ENCODE measurements at regions of chr15 and their contacts with region 1.

Region 1: DNA sequence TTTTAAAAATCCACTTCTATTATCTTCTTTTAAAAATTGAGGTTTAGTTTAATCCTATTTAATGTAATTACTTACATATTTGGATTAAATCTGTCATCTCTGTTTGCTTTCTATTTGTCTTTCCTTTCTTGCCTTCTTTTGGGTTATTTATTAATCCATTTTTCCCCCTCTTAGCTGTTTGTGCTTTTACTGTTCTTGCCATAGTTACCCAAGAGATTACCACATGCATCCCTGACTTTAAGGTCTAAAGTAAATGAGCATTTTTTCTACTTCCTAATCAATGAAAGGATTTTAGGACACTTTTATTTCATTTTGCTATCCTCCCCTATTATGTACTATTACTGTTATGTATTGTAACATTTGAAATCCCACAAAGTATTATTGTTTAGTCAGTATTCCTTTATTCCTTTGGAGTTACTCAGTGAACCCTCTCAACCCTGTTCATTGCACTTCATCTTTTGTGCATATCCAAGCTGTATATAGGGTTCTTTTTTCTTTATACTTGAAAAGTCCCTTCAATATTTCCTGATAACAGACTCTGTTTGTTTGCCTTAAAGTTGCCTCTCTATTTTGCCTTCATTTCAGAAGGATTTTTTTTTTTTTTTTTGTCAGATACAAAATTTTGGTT is 62.7 kb downstream of the MEF2A start:
- DNase-seq: no peak
- H3K4me3 ChIP-seq: no peak overlapping the region
- H3K27ac ChIP-seq: no peak overlapping the region
- H3K4me1 ChIP-seq: peaks cover 0 to 43% (median 21%) of the 10 kb centered on the region in 4 donors
- H3K27me3 ChIP-seq: no peaks in the 10 kb centered on the region
- CTCF ChIP-seq: no peak
- EP300 ChIP-seq: no peak
- POLR2A ChIP-seq: no peak

Region 2: GRCh38 chr15:98856218-98856907 is 772.1 kb before region 1 on chr15:
- intact Hi-C with region 1: no loop called
- DNase-seq: no peak
- H3K4me3 ChIP-seq: no peak overlapping the region
- H3K27ac ChIP-seq: peak overlapping the region; percentile 86 to 91 (median 89)
- H3K4me1 ChIP-seq: peaks cover 2 to 85% (median 78%) of the 10 kb centered on the region in 4 donors
- H3K27me3 ChIP-seq: no peaks in the 10 kb centered on the region
- CTCF ChIP-seq: no peak
- EP300 ChIP-seq: no peak
- POLR2A ChIP-seq: no peak

Region 3: DNA sequence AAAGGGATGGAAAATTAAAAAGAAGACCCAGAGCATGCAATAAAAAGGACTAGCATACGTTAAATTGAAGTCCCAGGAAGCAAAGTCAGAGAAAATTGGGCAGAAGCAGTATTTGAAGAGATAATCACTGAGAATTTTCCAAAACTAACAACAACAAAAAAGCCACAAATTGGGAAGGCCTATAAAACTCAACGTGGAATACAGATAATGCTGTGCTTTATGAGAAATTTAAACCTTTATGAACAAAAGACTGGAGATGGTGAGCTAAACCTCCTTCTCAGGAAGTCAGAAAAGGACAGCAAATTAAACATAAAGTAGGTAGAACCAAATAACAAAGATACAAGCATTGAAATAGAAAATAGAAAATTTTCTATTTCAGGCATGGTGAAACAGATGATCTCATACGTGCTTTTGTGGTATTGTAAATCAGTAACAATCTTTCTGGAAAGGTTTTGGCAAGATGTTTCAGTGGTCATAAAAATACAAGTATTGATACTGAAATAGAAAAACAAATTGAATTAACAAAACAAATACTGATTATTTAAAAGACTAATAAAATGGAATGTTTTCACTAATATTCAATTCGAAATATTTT is 49.1 kb after region 1 on chr15:
- intact Hi-C with region 1: loop called (anchors 5 kb)
- DNase-seq: no peak
- H3K4me3 ChIP-seq: no peak overlapping the region
- H3K27ac ChIP-seq: peak overlapping the region in 2 of 4 donors; percentile 47 to 64
- H3K4me1 ChIP-seq: peaks cover 0 to 27% (median 13%) of the 10 kb centered on the region in 4 donors
- H3K27me3 ChIP-seq: no peaks in the 10 kb centered on the region
- CTCF ChIP-seq: no peak
- EP300 ChIP-seq: no peak
- POLR2A ChIP-seq: no peak